ENCODE measurements at regions of chr22 and their contacts with region 1.

Region 1: DNA sequence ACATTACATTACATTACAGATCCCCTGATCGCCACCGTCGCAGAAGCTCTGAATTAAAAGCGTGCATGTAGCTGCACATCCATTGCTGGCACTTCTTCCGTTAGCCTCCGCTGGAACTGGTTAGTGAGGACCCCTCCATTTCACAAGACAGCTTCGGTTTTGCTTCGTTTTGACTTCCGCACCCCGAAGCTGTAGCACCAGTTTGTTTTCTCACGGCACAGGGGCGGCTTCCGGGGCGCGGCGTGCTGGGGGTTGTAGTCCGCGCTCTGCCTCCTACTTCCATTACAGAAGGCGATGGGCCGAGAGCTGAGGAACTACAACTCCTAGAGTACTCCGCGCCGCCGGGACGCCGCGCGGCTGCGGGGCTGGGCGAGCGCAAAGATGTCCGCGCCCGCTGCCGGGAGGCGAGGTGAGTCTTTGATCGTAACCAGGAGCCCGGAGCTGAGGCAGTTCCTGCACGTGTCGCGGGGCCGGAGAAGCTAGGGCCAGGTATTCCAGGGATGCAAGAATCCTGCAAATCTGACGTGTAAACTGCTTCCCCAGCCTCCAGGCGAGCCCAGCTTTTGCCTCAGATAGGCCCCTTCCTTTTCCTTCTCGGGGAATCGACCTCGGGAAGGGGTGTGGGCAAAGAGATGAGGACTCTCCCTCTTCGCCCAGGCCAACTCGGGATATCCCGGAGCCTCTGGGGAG is at the start of gene PEX26:
- DNase-seq: peak; percentile 95
- H3K4me3 ChIP-seq: peak within 1 kb of the TSS; percentile 97
- H3K27ac ChIP-seq: peak within 1 kb of the TSS; percentile 94
- H3K4me1 ChIP-seq: peaks cover 58% of the 10 kb centered on the region
- H3K27me3 ChIP-seq: no peaks in the 10 kb centered on the region
- CTCF ChIP-seq: no peak
- total RNA-seq, gene PEX26: 20.5 TPM

Region 2: GRCh38 chr22:17754233-17754925 is 323.4 kb before region 1 on chr22:
- intact Hi-C with region 1: no loop called
- DNase-seq: no peak
- H3K4me3 ChIP-seq: no peak overlapping the region
- H3K27ac ChIP-seq: no peak overlapping the region
- H3K4me1 ChIP-seq: peaks cover 6% of the 10 kb centered on the region
- H3K27me3 ChIP-seq: no peaks in the 10 kb centered on the region
- CTCF ChIP-seq: peak; percentile 53

Region 3: GRCh38 chr22:17830043-17830961 is 247.5 kb before region 1 on chr22:
- intact Hi-C with region 1: loop called (anchors 2 kb)
- DNase-seq: peak; percentile 83
- H3K4me3 ChIP-seq: peak overlapping the region; percentile 24
- H3K27ac ChIP-seq: peak overlapping the region; percentile 80
- H3K4me1 ChIP-seq: peaks cover 71% of the 10 kb centered on the region
- H3K27me3 ChIP-seq: no peaks in the 10 kb centered on the region
- CTCF ChIP-seq: peak; percentile 100